GM12878 (cell line): ENCODE measurements at regions of chr5 and their contacts with region 1.

Region 1: DNA sequence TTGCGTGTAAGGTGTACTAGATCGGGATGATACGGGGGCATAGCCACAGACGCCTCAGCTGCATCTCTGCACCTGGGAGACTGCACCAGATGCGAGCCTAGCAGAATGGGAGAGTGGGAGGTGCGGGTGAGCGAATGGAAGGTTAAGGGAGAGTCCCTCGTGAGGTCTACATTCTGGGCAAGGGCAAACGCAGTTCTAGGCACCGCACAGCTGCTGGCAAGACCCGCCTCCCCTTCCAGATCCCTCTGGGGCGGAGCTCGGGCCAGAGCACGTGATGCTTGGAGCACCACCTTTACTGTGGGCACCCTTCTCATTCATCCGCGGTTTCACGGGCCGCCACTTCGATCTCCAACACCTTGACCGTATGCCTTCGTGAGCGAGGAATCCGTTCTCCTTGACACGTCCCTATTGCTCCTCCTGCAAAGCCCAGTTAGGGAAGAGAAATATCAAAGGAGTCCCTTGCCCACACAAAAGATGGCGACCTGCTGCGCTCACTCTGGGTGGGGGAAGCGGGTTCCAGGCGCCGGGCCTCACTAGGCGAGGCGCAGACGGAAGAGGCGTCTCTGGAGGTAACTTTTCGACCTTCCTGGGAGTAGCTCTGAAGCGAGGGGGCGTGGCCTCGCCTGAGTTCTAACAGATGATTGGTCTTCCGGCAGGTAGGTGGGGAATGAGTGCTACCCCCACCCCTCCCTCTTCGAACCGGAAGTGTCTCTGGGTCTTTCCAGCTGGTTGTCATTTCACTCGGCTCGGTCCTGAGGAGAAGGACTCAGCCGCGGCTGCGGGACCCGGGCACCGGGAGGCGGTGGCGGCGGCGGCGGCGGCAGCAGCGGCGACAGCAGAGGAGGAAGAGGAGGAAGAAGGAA is at the start of gene CPEB4:
- DNase-seq: peak; percentile 99
- ATAC-seq: peak; percentile 90
- H3K4me3 ChIP-seq: peak within 1 kb of the TSS; percentile 94
- H3K27ac ChIP-seq: peak within 1 kb of the TSS; percentile 100
- H3K4me1 ChIP-seq: peaks cover 30% of the 10 kb centered on the region
- H3K27me3 ChIP-seq: no peaks in the 10 kb centered on the region
- CTCF ChIP-seq: no peak
- EP300 ChIP-seq: peak in 1 of 2 experiments; percentile 41; a peak in 1 of 4 replicates
- POLR2A ChIP-seq: peak; percentile 92
- RAD21 ChIP-seq: 0 out of 2 replicates have a peak, but pooled peaks have one; percentile 10
- polyA plus RNA-seq, gene CPEB4: 6.9 to 20.3 TPM

Region 2: GRCh38 chr5:173679909-173680630 is 207.8 kb before region 1 on chr5:
- CTCF ChIA-PET with region 1: interaction called, 5 read pairs
- POLR2A ChIA-PET with region 1: interaction called, 5 read pairs
- RAD21 ChIA-PET with region 1: interaction called, 7 read pairs
- SMC1A ChIA-PET with region 1: interaction called, 8 read pairs
- in situ Hi-C with region 1: no loop called
- intact Hi-C with region 1: loop called (anchors 5 kb)
- DNase-seq: peak; percentile 47
- ATAC-seq: peak; percentile 84
- H3K4me3 ChIP-seq: no peak overlapping the region
- H3K27ac ChIP-seq: peak overlapping the region; percentile 72
- H3K4me1 ChIP-seq: peaks cover 22% of the 10 kb centered on the region
- H3K27me3 ChIP-seq: no peaks in the 10 kb centered on the region
- CTCF ChIP-seq: no peak
- EP300 ChIP-seq: no peak
- POLR2A ChIP-seq: no peak
- RAD21 ChIP-seq: no peak

Region 3: GRCh38 chr5:173829817-173830216 is 58.0 kb before region 1 on chr5:
- CTCF ChIA-PET with region 1: interaction called, 31 read pairs
- POLR2A ChIA-PET with region 1: interaction called, 240 read pairs
- RAD21 ChIA-PET with region 1: interaction called, 395 read pairs
- SMC1A ChIA-PET with region 1: interaction called, 283 read pairs
- in situ Hi-C with region 1: no loop called
- intact Hi-C with region 1: no loop called
- DNase-seq: no peak
- ATAC-seq: peak; percentile 73
- H3K4me3 ChIP-seq: no peak overlapping the region
- H3K27ac ChIP-seq: peak overlapping the region; percentile 58
- H3K4me1 ChIP-seq: peaks cover 36% of the 10 kb centered on the region
- H3K27me3 ChIP-seq: no peaks in the 10 kb centered on the region
- CTCF ChIP-seq: no peak
- EP300 ChIP-seq: no peak
- POLR2A ChIP-seq: no peak
- RAD21 ChIP-seq: 0 out of 2 replicates have a peak, but pooled peaks have one; percentile 2

Region 4: GRCh38 chr5:173907686-173908371 is 20.0 kb after region 1 on chr5:
- CTCF ChIA-PET with region 1: interaction called, 36 read pairs
- POLR2A ChIA-PET with region 1: interaction called, 105 read pairs
- RAD21 ChIA-PET with region 1: interaction called, 142 read pairs
- SMC1A ChIA-PET with region 1: interaction called, 361 read pairs
- in situ Hi-C with region 1: no loop called
- intact Hi-C with region 1: no loop called
- DNase-seq: no peak
- ATAC-seq: peak; percentile 38
- H3K4me3 ChIP-seq: no peak overlapping the region
- H3K27ac ChIP-seq: peak overlapping the region; percentile 60
- H3K4me1 ChIP-seq: peaks cover 31% of the 10 kb centered on the region
- H3K27me3 ChIP-seq: no peaks in the 10 kb centered on the region
- CTCF ChIP-seq: no peak
- EP300 ChIP-seq: no peak
- POLR2A ChIP-seq: no peak
- RAD21 ChIP-seq: no peak

Region 5: GRCh38 chr5:173972925-173973615 is 85.2 kb after region 1 on chr5:
- CTCF ChIA-PET with region 1: interaction called, 6 read pairs
- POLR2A ChIA-PET with region 1: no interaction called
- RAD21 ChIA-PET with region 1: interaction called, 6 read pairs
- SMC1A ChIA-PET with region 1: interaction called, 11 read pairs
- in situ Hi-C with region 1: no loop called
- intact Hi-C with region 1: no loop called
- DNase-seq: peak; percentile 40
- ATAC-seq: peak; percentile 92
- H3K4me3 ChIP-seq: peak overlapping the region; percentile 66
- H3K27ac ChIP-seq: no peak overlapping the region
- H3K4me1 ChIP-seq: peaks cover 12% of the 10 kb centered on the region
- H3K27me3 ChIP-seq: no peaks in the 10 kb centered on the region
- CTCF ChIP-seq: peak; percentile 77 to 88 (median 82); a peak in 5 of 6 replicates
- EP300 ChIP-seq: no peak
- POLR2A ChIP-seq: no peak
- RAD21 ChIP-seq: peak; percentile 84